Activated CD4-positive, alpha-beta memory T cell treated with anti-CD3 and anti-CD28 coated beads for 36 hours (primary cell): ENCODE measurements at regions of chr15 and their contacts with region 1.

Region 1: DNA sequence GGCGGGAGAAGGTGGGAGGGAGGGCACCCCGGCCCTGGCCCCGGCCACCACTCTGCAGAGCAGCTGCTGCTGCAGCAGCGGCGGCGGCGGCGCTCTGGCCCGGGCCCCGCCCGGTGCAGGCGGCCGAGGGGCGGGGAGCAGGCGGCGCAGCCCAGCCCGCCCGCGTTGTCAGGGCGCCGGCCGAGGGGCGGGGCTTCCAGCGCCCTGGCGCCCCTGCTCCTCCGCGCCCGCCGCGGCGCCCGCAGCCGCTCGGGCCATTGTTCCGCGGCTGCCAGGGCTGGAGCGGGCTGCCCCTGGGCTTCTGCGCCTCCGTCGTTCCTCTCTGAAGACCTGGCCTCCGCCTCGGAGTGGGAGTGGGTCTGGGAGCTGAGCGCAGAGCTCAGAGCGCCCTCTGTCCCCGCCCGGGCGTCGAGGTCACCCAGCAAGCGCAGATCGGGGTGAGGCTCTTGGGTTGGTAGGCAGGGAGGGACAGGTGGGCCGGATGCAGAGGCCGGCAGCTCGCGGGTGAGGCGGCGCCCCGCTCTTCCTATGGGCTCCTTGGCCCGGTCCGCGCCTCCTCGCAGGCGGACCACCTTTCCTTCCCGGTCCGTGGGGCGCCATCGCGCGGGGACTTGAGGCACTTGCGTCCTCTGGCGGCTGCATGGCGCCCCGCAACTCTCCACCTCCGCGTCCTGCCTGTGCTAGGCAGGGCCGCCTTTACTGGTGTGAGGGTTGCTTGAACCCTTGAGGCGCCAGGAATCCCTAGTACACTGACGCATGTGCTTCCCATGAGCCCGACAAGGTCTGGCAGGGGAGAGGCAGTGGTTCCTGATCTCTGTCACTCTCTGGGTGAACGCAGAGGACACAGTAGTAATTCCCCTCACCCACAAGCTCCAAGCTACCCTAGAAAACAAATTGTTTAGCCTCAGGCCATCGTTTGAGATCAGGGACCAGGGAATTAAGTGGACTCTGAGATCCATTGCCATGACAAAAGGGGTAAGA is at the start of gene LPCAT4:
- DNase-seq: peak; percentile 91
- H3K4me3 Mint-ChIP-seq: peak within 1 kb of the TSS; percentile 96
- H3K27ac Mint-ChIP-seq: peak within 1 kb of the TSS; percentile 96
- H3K4me1 Mint-ChIP-seq: peaks cover 41% of the 10 kb centered on the region
- H3K27me3 Mint-ChIP-seq: no peaks in the 10 kb centered on the region
- total RNA-seq, gene LPCAT4: 62.5 to 71.3 TPM

Region 2: DNA sequence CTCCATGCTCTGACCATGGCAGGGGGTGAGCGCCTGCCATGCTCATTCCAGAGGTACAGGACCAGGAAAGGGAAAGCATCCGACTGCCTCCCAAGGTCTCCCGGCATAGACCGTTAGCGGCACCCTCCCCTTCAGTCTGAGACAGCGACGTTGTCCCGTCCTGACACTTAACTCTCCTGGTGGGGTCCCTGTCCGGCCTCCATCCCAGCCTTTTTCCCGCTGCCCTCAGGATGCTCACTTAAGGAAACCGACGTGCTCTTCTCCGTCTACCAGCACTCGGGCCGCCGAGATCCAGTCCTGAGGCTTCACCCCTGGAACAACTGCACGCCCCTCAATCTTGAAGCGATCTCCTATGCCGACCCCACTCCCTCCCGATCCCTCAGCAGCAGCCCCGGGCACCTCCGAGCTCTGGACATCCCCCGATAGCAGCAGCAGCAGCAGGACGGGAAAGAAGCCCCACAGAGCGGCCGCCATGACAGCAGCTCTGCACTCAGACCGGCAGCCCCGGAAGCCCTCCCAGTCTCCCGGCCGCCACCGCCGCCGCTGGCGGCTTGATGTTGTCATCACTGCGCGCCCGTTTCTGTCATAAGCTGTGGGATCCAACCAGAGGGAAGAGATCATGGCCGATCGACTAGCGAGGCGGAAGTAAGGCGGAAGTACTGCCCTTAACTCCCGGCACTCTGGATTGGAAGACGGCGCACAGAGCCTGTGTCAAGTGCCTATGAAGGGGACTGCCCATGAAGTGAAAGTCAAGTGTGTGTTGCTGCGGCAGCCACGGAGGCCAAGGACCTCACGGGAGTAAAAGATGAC is 265.8 kb before region 1 on chr15 and contains the starts of genes EMC7 and PGBD4:
- CTCF ChIA-PET with region 1: interaction called, 3 read pairs
- POLR2A ChIA-PET with region 1: no interaction called
- intact Hi-C with region 1: loop called (anchors 1 kb)
- DNase-seq: peak; percentile 100
- H3K4me3 Mint-ChIP-seq: peak within 1 kb of the TSS; percentile 99
- H3K27ac Mint-ChIP-seq: peak within 1 kb of the TSS; percentile 96
- H3K4me1 Mint-ChIP-seq: peaks cover 36% of the 10 kb centered on the region
- H3K27me3 Mint-ChIP-seq: no peaks in the 10 kb centered on the region
- total RNA-seq, gene EMC7: 62.7 to 68.4 TPM
- total RNA-seq, gene PGBD4: 2.0 to 2.3 TPM

Region 3: DNA sequence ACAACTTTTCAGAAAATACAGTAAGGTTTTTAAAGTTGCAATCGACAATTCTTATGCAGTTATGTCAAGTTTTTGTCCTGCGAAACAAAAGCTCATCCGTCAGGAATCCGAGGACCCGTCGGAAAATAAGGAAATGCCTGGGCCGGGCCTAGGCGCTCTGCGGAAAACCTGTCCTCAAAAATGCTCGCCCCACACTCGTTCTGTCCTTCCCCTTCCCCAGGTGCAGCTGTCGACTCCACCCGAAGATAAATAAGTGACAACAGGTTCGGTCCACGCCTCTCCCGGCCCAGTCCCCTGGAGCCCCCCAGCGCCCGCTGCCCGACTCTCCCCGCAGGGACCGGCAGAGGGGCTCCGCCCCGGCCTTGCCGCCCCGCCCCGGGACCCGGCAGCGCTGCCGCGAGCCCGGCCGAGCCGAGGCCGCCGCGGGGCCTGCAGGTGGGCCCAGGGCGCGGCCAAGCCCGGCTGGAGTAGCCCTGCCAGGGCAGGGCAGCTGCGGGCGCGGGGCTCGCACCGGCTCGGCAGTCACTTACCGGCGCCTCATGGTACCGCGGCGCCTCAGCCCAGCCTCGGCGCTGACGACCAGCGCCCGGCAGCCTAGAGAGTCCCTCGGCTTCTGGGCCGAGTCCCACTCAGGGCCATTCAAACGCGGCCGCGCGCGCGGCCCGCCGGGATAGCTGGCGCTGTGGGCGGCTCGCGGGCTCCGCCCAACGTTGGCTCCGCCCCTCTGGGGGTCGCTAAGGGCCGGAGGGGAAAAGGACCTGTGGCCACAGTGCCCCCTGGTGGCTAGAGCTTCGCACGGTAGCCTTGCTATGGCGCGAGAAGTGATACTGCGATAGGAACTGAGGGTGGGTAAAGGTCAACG is 157.7 kb before region 1 on chr15 and contains the start of gene KATNBL1:
- CTCF ChIA-PET with region 1: interaction called, 5 read pairs
- POLR2A ChIA-PET with region 1: interaction called, 6 read pairs
- intact Hi-C with region 1: loop called (anchors 1 kb)
- DNase-seq: peak; percentile 98
- H3K4me3 Mint-ChIP-seq: peak within 1 kb of the TSS; percentile 87
- H3K27ac Mint-ChIP-seq: peak within 1 kb of the TSS; percentile 69
- H3K4me1 Mint-ChIP-seq: peaks cover 25% of the 10 kb centered on the region
- H3K27me3 Mint-ChIP-seq: no peaks in the 10 kb centered on the region
- total RNA-seq, gene KATNBL1: 44.7 to 56.7 TPM

Region 4: GRCh38 chr15:34241372-34242330 is 125.7 kb before region 1 on chr15:
- CTCF ChIA-PET with region 1: interaction called, 45 read pairs
- POLR2A ChIA-PET with region 1: interaction called, 3 read pairs
- intact Hi-C with region 1: loop called (anchors 1 kb)
- DNase-seq: peak; percentile 31
- H3K4me3 Mint-ChIP-seq: no peak overlapping the region
- H3K27ac Mint-ChIP-seq: peak overlapping the region; percentile 64
- H3K4me1 Mint-ChIP-seq: peaks cover 38% of the 10 kb centered on the region
- H3K27me3 Mint-ChIP-seq: no peaks in the 10 kb centered on the region

Region 5: GRCh38 chr15:34337557-34338306 is 29.7 kb before region 1 on chr15 and contains the start of gene SLC12A6:
- CTCF ChIA-PET with region 1: interaction called, 47 read pairs
- POLR2A ChIA-PET with region 1: interaction called, 29 read pairs
- intact Hi-C with region 1: loop called (anchors 1 kb)
- DNase-seq: peak; percentile 92
- H3K4me3 Mint-ChIP-seq: peak within 1 kb of the TSS; percentile 95
- H3K27ac Mint-ChIP-seq: peak within 1 kb of the TSS; percentile 88
- H3K4me1 Mint-ChIP-seq: peaks cover 68% of the 10 kb centered on the region
- H3K27me3 Mint-ChIP-seq: no peaks in the 10 kb centered on the region
- total RNA-seq, gene SLC12A6: 18.4 to 18.5 TPM

Region 6: DNA sequence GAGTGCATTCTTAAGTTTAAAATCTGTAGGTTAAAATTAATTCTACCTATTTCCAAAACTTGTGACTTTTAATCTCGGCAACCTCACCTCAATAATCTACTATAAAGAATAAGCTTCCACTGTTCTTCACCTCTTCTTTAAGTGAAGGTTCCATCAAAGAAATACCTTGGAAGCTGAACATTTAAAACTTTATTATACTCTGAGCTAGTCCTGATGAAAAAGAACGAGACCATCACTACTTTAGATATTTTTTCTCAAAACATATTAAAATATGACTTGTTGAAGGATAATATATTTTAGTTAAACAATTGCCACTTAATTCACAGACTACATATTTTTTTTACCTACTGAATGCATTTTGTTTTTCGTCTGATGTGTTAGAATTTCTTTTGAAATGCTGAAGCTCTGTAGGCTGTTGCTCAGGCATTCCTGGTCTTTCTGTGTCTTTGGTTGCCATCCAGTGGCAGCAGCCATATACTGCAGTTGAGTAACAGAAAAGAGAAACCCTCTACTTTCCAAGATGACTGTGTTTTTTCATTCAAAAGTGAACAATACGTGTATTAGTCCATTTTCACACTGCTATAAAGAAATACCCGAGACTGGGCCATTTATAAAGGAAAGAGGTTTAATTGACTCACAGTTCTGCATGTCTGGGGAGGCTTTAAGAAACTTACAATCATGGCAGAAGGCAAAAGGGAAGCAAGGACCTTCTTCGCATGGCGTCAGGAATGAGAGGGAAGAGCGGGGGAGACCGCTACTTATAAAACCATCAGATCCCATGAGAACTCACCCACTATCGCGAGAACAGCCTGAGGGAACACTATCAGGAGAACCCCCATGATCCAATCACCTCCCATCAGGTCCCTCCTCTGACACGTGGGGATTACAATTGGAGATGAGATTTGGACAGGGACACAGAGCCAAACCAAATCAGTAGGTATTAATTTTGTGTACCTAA is 220.6 kb after region 1 on chr15:
- CTCF ChIA-PET with region 1: interaction called, 32 read pairs
- POLR2A ChIA-PET with region 1: interaction called, 15 read pairs
- intact Hi-C with region 1: loop called (anchors 1 kb)
- DNase-seq: peak; percentile 77
- H3K4me3 Mint-ChIP-seq: peak overlapping the region; percentile 76
- H3K27ac Mint-ChIP-seq: peak overlapping the region; percentile 65
- H3K4me1 Mint-ChIP-seq: peaks cover 13% of the 10 kb centered on the region
- H3K27me3 Mint-ChIP-seq: no peaks in the 10 kb centered on the region